ENCODE measurements at regions of chr9 and their contacts with region 1.

Region 1: DNA sequence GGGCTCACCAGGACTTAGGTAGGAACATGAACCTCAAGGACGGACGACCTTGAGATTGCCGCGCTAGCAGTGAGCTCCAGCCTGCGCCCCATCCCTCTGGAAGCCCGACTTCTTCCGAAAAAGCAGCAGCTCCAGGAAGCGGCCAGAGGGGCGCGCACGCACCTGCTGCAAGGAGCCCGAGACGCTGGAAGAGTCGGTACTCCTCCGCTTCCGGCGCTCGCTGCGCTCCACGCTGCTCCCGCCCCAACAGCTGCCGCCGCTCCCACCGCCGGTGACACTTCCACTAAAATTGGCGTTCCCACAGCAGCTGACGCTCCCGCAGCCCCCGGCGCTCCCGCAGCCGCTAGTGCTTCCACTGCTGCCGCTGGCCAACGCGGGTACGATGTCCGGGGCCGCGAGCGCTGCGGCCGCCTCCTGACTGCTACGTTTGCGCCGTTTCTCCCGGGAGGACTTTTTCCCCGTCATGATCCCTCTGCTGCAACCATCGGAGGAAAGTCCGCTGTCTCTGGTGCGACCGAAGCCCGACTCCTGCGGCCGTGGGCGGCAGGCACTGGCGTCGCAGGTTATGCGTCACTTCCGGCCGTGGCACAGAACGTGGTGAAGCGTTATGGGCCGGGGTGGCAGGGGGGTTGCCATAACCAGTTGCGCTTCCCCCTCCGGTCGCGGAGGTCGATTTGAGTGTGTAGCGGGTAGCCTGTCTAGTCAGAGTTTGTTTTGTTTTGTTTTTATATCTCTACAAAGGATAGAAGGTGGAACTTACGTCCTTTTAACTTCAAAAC is at the start of gene CAAP1:
- DNase-seq: peak; percentile 62 to 95
- H3K4me3 ChIP-seq: peak within 1 kb of the TSS; percentile 95 to 98
- H3K27ac ChIP-seq: peak within 1 kb of the TSS; percentile 97 to 99
- H3K4me1 ChIP-seq: peaks cover 4 to 16% of the 10 kb centered on the region in 2 donors
- H3K27me3 ChIP-seq: no peaks in the 10 kb centered on the region
- CTCF ChIP-seq: peak; percentile 17 to 53 (median 43)
- total RNA-seq, gene CAAP1: 59.5 TPM

Region 2: GRCh38 chr9:26919698-26920097 is 27.3 kb after region 1 on chr9:
- intact Hi-C with region 1: no loop called
- DNase-seq: no peak
- H3K4me3 ChIP-seq: no peak overlapping the region
- H3K27ac ChIP-seq: no peak overlapping the region
- H3K4me1 ChIP-seq: no peaks in the 10 kb centered on the region
- H3K27me3 ChIP-seq: no peaks in the 10 kb centered on the region
- CTCF ChIP-seq: no peak

Region 3: DNA sequence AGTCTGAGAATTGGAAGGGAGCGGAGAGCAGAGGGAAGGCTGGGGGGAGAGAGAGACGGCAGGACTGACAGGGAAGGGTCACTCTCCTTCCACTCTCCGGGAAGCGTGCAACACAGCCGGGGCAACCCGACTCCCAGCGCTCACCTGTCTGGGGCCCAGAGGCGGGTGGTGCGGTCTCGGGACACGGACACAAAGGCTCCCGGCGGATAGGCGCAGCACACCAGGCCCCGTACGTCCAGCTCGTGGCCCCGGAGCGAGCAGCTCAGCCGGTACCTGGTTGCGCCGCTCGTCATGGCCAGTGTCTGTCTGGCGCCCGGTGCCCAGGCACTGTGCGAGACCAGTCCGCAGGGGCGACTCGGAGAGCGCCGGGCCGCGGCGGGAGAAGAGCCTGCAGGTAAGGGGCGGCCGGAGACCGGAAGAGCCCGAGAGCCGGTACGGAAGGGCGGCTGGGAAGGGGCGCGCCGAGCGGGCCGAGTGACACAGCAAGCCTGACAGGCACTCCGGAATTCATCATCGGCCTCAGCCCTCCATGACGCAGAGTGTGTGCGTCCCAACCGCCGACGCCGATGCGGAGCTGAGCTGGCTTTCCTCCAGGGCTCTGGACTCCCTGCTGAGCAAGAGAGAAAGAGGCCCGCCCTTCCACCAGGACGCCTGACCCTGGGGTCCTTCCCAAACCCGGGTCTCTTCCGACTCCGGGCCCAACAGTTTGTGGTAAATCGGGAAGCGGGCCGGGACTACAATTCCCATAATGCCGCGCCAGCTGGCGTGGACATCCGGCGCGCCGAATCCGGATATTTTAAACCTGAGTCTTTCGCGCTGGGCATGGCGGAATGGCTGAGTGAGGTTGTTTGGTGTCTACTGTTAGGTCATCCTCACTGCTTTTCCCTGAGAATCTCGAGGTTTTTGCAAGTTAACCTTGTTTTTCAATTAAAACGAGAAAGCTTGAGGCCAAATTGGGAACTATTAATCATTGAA is 54.6 kb after region 1 on chr9 and contains the start of gene PLAA:
- intact Hi-C with region 1: loop called (anchors 1 kb)
- DNase-seq: peak; percentile 60 to 93
- H3K4me3 ChIP-seq: peak within 1 kb of the TSS; percentile 75 to 96
- H3K27ac ChIP-seq: peak within 1 kb of the TSS; percentile 95 to 99
- H3K4me1 ChIP-seq: peaks cover 11 to 18% of the 10 kb centered on the region in 2 donors
- H3K27me3 ChIP-seq: no peaks in the 10 kb centered on the region
- CTCF ChIP-seq: no peak
- total RNA-seq, gene PLAA: 14.5 TPM

Region 4: GRCh38 chr9:26955921-26956859 is 63.8 kb after region 1 on chr9 and contains the start of gene IFT74:
- intact Hi-C with region 1: loop called (anchors 2 kb)
- DNase-seq: peak; percentile 97 to 99
- H3K4me3 ChIP-seq: peak within 1 kb of the TSS; percentile 63 to 79
- H3K27ac ChIP-seq: peak within 1 kb of the TSS; percentile 87 to 90
- H3K4me1 ChIP-seq: peaks cover 2 to 11% of the 10 kb centered on the region in 2 donors
- H3K27me3 ChIP-seq: no peaks in the 10 kb centered on the region
- CTCF ChIP-seq: no peak
- total RNA-seq, gene IFT74: 5.2 TPM

Measured in ascending aorta (tissue), 2 donors.